ENCODE measurements at regions of chr18 and their contacts with region 1.

Region 1: GRCh38 chr18:3771121-3771971 is 321.4 kb downstream of the TGIF1 start:
- DNase-seq: peak; percentile 95
- H3K4me3 ChIP-seq: peak overlapping the region; percentile 14
- H3K27ac ChIP-seq: peak overlapping the region; percentile 77
- H3K4me1 ChIP-seq: peaks cover 53% of the 10 kb centered on the region
- H3K27me3 ChIP-seq: no peaks in the 10 kb centered on the region
- CTCF ChIP-seq: peak; percentile 98

Region 2: GRCh38 chr18:3683483-3683882 is 87.9 kb before region 1 on chr18:
- CTCF ChIA-PET with region 1: interaction called, 11 read pairs
- POLR2A ChIA-PET with region 1: no interaction called
- intact Hi-C with region 1: no loop called
- DNase-seq: peak; percentile 56
- H3K4me3 ChIP-seq: no peak overlapping the region
- H3K27ac ChIP-seq: no peak overlapping the region
- H3K4me1 ChIP-seq: peaks cover 17% of the 10 kb centered on the region
- H3K27me3 ChIP-seq: no peaks in the 10 kb centered on the region
- CTCF ChIP-seq: no peak

Region 3: DNA sequence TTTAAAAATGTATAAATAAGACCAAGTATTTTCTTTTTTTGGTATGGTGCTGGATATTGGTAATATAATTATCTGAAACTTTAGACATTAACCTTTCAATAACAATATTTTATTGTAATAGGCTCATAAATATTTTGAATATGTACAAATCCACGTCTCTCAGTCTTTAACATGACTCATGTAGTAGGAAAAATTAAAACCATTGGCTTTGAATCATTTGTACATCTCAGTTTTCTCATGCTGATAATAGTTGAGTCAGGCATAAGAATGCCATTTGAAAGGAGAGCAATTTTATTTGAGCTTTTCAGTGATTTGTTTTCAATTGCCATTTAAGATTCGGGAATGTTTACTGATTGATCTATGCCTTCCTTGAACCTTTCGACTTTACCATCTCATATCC is 43.5 kb after region 1 on chr18:
- CTCF ChIA-PET with region 1: interaction called, 5 read pairs
- POLR2A ChIA-PET with region 1: interaction called, 11 read pairs
- intact Hi-C with region 1: no loop called
- DNase-seq: no peak
- H3K4me3 ChIP-seq: no peak overlapping the region
- H3K27ac ChIP-seq: peak overlapping the region; percentile 11
- H3K4me1 ChIP-seq: peaks cover 29% of the 10 kb centered on the region
- H3K27me3 ChIP-seq: no peaks in the 10 kb centered on the region
- CTCF ChIP-seq: no peak

Region 4: GRCh38 chr18:3832025-3832638 is 60.8 kb after region 1 on chr18:
- CTCF ChIA-PET with region 1: interaction called, 3 read pairs
- POLR2A ChIA-PET with region 1: no interaction called
- intact Hi-C with region 1: loop called (anchors 1 kb)
- DNase-seq: peak; percentile 78
- H3K4me3 ChIP-seq: no peak overlapping the region
- H3K27ac ChIP-seq: peak overlapping the region; percentile 98
- H3K4me1 ChIP-seq: peaks cover 84% of the 10 kb centered on the region
- H3K27me3 ChIP-seq: no peaks in the 10 kb centered on the region
- CTCF ChIP-seq: no peak

Region 5: DNA sequence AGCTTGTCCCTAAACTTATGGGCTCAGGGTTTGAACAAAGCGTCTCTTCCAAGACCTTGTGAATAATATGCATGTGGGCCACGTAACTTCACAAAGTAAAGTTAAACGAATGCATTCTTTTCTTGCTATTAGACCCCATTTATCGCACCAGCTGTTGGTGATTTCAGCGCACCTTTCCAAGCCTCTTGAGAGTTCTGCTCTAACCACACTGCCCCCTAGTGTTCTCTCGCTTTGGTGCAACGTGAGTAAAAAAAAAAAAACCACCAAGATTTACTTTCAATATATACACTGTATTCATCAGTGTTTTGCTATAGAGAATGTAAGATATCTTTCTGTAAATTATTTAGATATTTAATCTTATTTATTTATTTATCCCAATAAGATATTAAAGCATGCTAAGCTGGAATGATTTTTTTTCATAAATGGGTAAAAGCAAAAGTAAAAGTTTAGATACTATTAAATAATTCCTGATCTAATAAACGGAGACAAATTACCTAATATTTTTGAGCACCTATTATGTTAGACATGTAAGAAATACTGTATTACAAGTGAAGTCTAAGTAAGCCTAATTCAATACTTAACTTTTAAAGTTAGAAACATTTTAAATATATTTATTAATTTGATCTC is 224.2 kb after region 1 on chr18:
- CTCF ChIA-PET with region 1: interaction called, 4 read pairs
- POLR2A ChIA-PET with region 1: no interaction called
- intact Hi-C with region 1: loop called (anchors 2 kb)
- DNase-seq: peak; percentile 93
- H3K4me3 ChIP-seq: peak overlapping the region; percentile 13
- H3K27ac ChIP-seq: peak overlapping the region; percentile 83
- H3K4me1 ChIP-seq: peaks cover 48% of the 10 kb centered on the region
- H3K27me3 ChIP-seq: no peaks in the 10 kb centered on the region
- CTCF ChIP-seq: peak; percentile 92

Region 6: DNA sequence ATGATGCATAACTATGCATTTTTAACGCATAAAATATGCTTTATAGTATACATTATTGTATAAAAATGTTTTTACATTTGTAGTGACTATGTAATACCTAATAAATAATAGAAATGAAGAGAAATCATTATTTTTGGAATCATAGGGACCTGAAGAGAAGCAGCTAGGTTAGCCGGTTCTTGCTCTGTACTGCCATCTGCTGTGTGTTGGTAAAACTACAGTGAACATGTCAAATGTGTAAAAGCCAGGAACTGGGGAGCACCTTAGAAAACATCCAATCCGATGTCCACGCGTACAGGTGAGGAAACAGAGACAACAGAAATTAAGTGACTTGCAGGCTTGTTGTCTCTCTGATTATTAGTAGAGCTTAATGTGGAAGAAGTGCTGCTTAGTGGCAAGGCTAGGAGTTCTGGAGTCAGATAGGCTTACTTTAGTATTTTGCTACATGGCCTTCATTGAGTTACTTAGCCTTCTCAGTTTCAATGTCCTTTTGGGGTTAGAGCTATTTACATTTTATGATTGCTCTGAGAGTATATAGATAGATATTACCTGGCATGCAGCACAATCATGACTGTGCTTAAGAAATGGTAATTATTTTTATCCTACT is 297.3 kb after region 1 on chr18:
- CTCF ChIA-PET with region 1: no interaction called
- POLR2A ChIA-PET with region 1: no interaction called
- intact Hi-C with region 1: loop called (anchors 5 kb)
- DNase-seq: peak; percentile 73
- H3K4me3 ChIP-seq: no peak overlapping the region
- H3K27ac ChIP-seq: peak overlapping the region; percentile 21
- H3K4me1 ChIP-seq: no peaks in the 10 kb centered on the region
- H3K27me3 ChIP-seq: no peaks in the 10 kb centered on the region
- CTCF ChIP-seq: peak; percentile 82